ENCODE measurements at regions of chr5 and their contacts with region 1.

Region 1: GRCh38 chr5:52948418-52949076 is 40.6 kb upstream of the ITGA2 start:
- DNase-seq: peak; percentile 52 to 81
- ATAC-seq: peak; percentile 96 to 98
- H3K4me3 ChIP-seq: no peak overlapping the region
- H3K27ac ChIP-seq: peak overlapping the region in 1 of 2 experiments; percentile 55; a peak in 1 of 6 replicates
- H3K4me1 ChIP-seq: peaks cover 13% of the 10 kb centered on the region; the same call in 2 of the 3 replicates
- CTCF ChIP-seq: peak; percentile 88
- EP300 ChIP-seq: no peak
- POLR2A ChIP-seq: no peak
- RAD21 ChIP-seq: peak; percentile 97

Region 2: DNA sequence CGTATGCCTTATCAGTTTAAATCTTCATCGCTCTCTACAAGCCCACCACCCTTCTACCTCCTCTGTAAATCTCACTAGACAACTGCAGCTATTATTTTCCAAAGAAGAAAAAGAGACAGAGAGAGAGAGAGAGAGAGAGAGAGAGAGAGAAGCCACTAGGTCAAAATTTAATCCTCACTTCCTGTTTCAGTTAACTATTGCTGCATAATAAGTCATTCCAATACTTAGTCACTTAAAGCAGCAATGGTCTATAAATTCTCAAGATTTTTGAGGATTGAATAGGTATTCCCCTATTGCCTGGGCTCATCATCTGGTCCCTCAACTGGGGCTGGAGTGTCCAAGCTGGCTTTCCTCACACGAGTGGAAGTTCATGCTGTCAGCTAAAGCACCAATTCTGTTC is 92.0 kb before region 1 on chr5:
- CTCF ChIA-PET with region 1: no interaction called
- POLR2A ChIA-PET with region 1: no interaction called
- DNase-seq: no peak
- ATAC-seq: no peak
- H3K4me3 ChIP-seq: no peak overlapping the region
- H3K27ac ChIP-seq: no peak overlapping the region
- H3K4me1 ChIP-seq: no peaks in the 10 kb centered on the region
- CTCF ChIP-seq: no peak
- EP300 ChIP-seq: no peak
- POLR2A ChIP-seq: no peak
- RAD21 ChIP-seq: no peak

Region 3: GRCh38 chr5:52938226-52938625 is 10.3 kb before region 1 on chr5:
- CTCF ChIA-PET with region 1: interaction called, 25 read pairs
- POLR2A ChIA-PET with region 1: no interaction called
- DNase-seq: no peak
- ATAC-seq: no peak
- H3K4me3 ChIP-seq: no peak overlapping the region
- H3K27ac ChIP-seq: no peak overlapping the region
- H3K4me1 ChIP-seq: no peaks in the 10 kb centered on the region
- CTCF ChIP-seq: no peak
- EP300 ChIP-seq: no peak
- POLR2A ChIP-seq: no peak
- RAD21 ChIP-seq: no peak

Region 4: DNA sequence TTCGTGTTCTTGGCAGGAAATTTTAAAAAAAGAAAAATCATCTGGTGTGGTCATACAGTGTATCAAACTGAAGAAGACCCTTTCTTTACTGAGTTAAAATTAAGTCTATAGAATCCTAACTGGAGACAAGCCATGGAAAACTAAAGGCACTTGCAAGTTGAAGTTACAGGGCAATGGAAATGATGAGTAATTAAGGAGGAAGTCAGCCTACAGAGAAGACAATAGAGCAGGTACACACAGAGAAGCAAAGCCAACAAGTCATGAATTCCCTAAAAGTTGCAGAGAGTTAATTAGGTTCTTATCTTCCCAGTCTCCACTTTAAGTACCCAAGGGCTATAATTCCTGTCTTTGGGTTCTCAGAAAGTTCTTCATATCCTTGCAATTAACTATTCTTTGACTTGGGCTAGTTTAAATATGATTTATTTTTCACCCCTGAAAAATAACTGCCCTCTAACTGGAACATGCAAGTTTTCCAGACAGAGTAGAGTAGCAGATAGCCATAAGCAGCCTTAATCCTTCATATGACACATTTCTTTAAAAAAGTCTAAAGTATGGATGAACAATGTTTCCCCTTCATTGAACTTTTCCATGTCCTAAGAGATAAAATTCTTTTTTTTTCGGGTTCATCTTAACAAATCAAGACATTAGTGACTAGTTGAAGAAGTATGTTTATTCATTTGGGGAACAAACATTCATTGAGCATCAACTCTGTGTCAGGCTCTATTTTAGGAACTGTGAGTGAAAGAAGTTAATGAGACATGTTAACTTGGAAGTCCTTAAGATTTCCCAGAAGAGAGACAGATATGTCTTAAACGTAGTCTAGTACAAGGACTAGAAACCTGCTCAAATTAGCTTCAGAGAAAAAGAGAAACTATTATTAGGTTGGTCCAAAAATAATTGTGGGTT is 35.4 kb after region 1 on chr5:
- CTCF ChIA-PET with region 1: interaction called, 61 read pairs
- POLR2A ChIA-PET with region 1: interaction called, 8 read pairs
- DNase-seq: no peak
- ATAC-seq: no peak
- H3K4me3 ChIP-seq: no peak overlapping the region
- H3K27ac ChIP-seq: no peak overlapping the region
- H3K4me1 ChIP-seq: peaks cover 17% of the 10 kb centered on the region
- CTCF ChIP-seq: no peak
- EP300 ChIP-seq: no peak
- POLR2A ChIP-seq: no peak
- RAD21 ChIP-seq: no peak

Region 5: GRCh38 chr5:53035868-53036381 is 87.4 kb after region 1 on chr5:
- CTCF ChIA-PET with region 1: interaction called, 27 read pairs
- POLR2A ChIA-PET with region 1: interaction called, 3 read pairs
- DNase-seq: peak; percentile 46 to 48
- ATAC-seq: peak; percentile 52 to 69; a peak in 3 of 6 replicates
- H3K4me3 ChIP-seq: no peak overlapping the region
- H3K27ac ChIP-seq: peak overlapping the region; percentile 46 to 70; a peak in 5 of 6 replicates
- H3K4me1 ChIP-seq: peaks cover 72% of the 10 kb centered on the region
- CTCF ChIP-seq: peak; percentile 48
- EP300 ChIP-seq: no peak
- POLR2A ChIP-seq: no peak
- RAD21 ChIP-seq: peak; percentile 22 to 41; a peak in 2 of 5 replicates

Region 6: DNA sequence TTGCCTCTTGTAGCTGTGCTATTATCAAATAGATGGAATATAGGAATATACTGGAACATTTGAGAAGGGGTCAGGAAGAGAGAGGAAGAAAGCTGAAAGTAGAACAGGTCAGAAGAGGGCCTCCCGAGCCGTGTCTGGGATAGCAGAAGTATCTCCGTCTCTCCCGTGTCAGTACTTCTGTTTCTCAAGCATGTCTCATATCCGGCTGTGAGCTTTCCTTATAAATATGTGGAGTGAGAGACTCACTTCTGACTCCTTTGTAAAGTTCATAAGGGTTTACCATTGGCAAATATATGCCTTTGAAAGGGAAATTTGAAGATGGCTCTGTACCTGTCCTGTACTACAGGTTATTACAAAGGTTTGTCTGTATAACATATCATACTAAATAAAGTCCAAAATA is 110.7 kb after region 1 on chr5:
- CTCF ChIA-PET with region 1: interaction called, 29 read pairs
- POLR2A ChIA-PET with region 1: no interaction called
- DNase-seq: no peak
- ATAC-seq: no peak
- H3K4me3 ChIP-seq: no peak overlapping the region
- H3K27ac ChIP-seq: no peak overlapping the region
- H3K4me1 ChIP-seq: no peaks in the 10 kb centered on the region
- CTCF ChIP-seq: no peak
- EP300 ChIP-seq: no peak
- POLR2A ChIP-seq: no peak
- RAD21 ChIP-seq: no peak

Region 7: DNA sequence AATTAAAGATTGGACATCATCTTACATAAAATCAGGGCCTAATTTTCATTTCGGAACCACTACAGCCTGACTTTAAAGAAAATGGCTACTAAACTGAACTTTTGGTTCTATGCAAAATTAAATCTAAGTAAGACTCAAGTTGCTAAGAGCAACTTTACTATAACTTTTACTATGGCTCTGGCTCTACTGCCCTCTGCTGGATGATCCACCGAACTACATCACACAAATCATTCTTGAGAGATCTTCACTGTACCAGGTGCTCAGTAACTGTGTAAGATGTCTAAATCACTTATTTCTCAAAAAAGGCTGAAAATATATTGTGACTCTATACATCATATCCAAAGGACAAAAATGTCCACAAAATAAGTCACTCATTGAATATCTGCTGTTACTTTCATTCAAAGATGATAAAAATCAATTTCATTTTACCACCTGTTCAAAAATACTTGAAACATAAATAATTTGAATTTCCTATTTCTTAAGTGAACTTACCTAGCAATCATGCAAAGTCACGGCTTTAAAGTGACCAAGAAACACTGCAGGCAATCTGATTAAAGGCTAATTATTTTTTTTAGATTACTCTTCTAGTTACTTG is 147.5 kb after region 1 on chr5:
- CTCF ChIA-PET with region 1: interaction called, 124 read pairs
- POLR2A ChIA-PET with region 1: interaction called, 4 read pairs
- DNase-seq: peak; percentile 51 to 69
- ATAC-seq: peak; percentile 65 to 85; a peak in 3 of 6 replicates
- H3K4me3 ChIP-seq: no peak overlapping the region
- H3K27ac ChIP-seq: no peak overlapping the region
- H3K4me1 ChIP-seq: peaks cover 20% of the 10 kb centered on the region
- CTCF ChIP-seq: peak; percentile 88
- EP300 ChIP-seq: no peak
- POLR2A ChIP-seq: no peak
- RAD21 ChIP-seq: peak; percentile 84 to 85